ENCODE measurements at regions of chr13 and their contacts with region 1.

Region 1: GRCh38 chr13:102845630-102846260 is at the start of gene ERCC5:
- DNase-seq: peak in 1 of 2 donors; percentile 94
- H3K4me3 ChIP-seq: peak within 1 kb of the TSS; percentile 74 to 87
- H3K27ac ChIP-seq: peak within 1 kb of the TSS; percentile 91
- H3K4me1 ChIP-seq: peaks cover 29% of the 10 kb centered on the region
- H3K27me3 ChIP-seq: no peaks in the 10 kb centered on the region
- CTCF ChIP-seq: no peak
- POLR2A ChIP-seq: peak in 1 of 2 donors; percentile 43
- total RNA-seq, gene ERCC5: 41.3 TPM

Region 2: GRCh38 chr13:102596147-102597028 is 249.4 kb before region 1 on chr13 and contains the start of gene TPP2:
- intact Hi-C with region 1: loop called (anchors 2 kb)
- DNase-seq: peak; percentile 98 to 99
- H3K4me3 ChIP-seq: peak within 1 kb of the TSS; percentile 95 to 96
- H3K27ac ChIP-seq: peak within 1 kb of the TSS; percentile 96
- H3K4me1 ChIP-seq: peaks cover 51% of the 10 kb centered on the region
- H3K27me3 ChIP-seq: no peaks in the 10 kb centered on the region
- CTCF ChIP-seq: no peak
- POLR2A ChIP-seq: peak in 1 of 2 donors; percentile 63
- total RNA-seq, gene TPP2: 40.0 TPM

Region 3: DNA sequence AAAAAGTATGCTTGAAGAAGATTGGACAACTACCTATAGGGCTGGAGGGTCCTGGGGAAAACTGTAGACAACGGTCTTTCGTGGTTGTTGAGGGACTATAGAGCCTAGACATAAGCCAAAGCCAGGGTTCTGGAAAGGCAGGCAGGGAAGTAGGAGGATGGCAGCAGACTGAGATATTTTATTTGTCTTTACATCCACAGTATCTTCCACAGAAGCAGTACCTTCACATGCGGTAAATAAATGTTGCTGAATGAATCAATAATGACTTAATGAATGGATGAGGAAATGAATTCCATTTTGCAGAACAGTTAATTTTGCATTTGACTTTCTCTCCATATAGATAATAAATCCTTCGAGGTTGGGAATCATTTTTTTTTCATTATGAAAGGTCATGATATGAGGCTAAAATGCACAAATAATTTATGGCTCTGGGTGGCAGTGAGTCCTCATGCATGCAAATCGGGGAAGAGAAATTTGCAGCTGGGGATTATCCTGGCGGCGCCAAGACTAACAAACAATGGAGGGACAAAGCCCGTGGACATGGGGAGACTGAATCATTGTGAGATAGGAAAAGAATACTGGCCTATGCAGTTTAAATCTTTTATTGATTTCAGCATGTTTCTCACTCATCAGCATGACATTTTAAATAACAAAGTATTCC is 102.1 kb after region 1 on chr13:
- intact Hi-C with region 1: no loop called
- DNase-seq: no peak
- H3K4me3 ChIP-seq: no peak overlapping the region
- H3K27ac ChIP-seq: no peak overlapping the region
- H3K4me1 ChIP-seq: no peaks in the 10 kb centered on the region
- H3K27me3 ChIP-seq: no peaks in the 10 kb centered on the region
- CTCF ChIP-seq: no peak
- POLR2A ChIP-seq: no peak